CD4-positive, alpha-beta memory T cell (primary cell): ENCODE measurements at regions of chr4 and their contacts with region 1.

Region 1: DNA sequence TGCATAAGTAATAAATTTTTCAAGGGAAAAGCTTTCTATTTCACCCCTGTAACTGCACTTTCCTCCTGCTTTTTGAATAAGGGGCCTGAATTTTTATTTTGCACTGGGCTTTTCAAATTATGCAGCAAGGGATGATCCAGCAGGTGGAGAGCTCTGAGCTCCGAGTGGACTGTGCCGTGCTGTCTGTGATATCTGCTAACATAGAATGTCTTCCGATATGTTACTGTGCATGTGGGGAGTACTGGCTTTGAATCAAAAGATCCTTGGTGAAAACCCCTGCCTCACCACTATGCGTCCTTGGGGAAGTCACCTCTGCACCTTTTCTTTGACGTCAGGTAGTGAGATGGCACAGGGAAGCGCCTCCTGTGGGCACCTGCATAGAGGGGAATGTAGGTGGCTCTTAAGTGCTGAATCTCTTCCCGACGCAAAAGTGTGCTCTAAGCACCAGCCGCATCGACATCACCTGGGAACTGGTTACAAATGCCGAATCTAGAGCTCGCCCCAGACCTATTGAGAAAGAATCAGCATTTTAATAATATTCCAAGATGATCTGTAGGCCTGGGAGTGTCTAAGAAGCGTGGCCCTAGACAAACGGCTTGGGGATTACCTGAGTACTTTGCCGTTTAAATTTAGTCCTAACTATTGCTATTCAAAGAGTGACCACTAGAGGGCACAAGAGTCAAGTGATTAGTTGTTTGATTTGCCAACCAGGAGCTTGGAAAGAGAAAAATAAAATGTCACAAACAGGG is 19.2 kb upstream of the WFS1 start:
- DNase-seq: peak in 4 of 5 donors; percentile 61 to 70 (median 66)
- H3K4me3 ChIP-seq: no peak overlapping the region
- H3K4me3 Mint-ChIP-seq: no peak overlapping the region
- H3K27ac ChIP-seq: no peak overlapping the region
- H3K27ac Mint-ChIP-seq: no peak overlapping the region
- H3K4me1 ChIP-seq: no peaks in the 10 kb centered on the region
- H3K4me1 Mint-ChIP-seq: peaks cover 0 to 6% (median 5%) of the 10 kb centered on the region in 4 donors
- H3K27me3 ChIP-seq: peaks cover 6% of the 10 kb centered on the region
- H3K27me3 Mint-ChIP-seq: peaks cover 10 to 30% of the 10 kb centered on the region in 2 donors

Region 2: GRCh38 chr4:6134612-6135220 is 115.7 kb before region 1 on chr4:
- CTCF ChIA-PET with region 1: interaction called, 83 read pairs
- POLR2A ChIA-PET with region 1: interaction called, 8 read pairs
- intact Hi-C with region 1: loop called (anchors 1 kb)
- DNase-seq: peak; percentile 48 to 75 (median 60)
- H3K4me3 ChIP-seq: no peak overlapping the region
- H3K4me3 Mint-ChIP-seq: no peak overlapping the region
- H3K27ac ChIP-seq: no peak overlapping the region
- H3K27ac Mint-ChIP-seq: peak overlapping the region; percentile 6 to 78 (median 49)
- H3K4me1 ChIP-seq: peaks cover 11% of the 10 kb centered on the region
- H3K4me1 Mint-ChIP-seq: peaks cover 6 to 20% (median 14%) of the 10 kb centered on the region in 4 donors
- H3K27me3 ChIP-seq: no peaks in the 10 kb centered on the region
- H3K27me3 Mint-ChIP-seq: no peaks in the 10 kb centered on the region

Region 3: GRCh38 chr4:6155996-6156750 is 94.2 kb before region 1 on chr4:
- CTCF ChIA-PET with region 1: interaction called, 12 read pairs
- POLR2A ChIA-PET with region 1: no interaction called
- intact Hi-C with region 1: no loop called
- DNase-seq: no peak
- H3K4me3 ChIP-seq: no peak overlapping the region
- H3K4me3 Mint-ChIP-seq: no peak overlapping the region
- H3K27ac ChIP-seq: no peak overlapping the region
- H3K27ac Mint-ChIP-seq: peak overlapping the region in 2 of 7 donors; percentile 23 to 73
- H3K4me1 ChIP-seq: peaks cover 55% of the 10 kb centered on the region
- H3K4me1 Mint-ChIP-seq: peaks cover 19 to 83% (median 47%) of the 10 kb centered on the region in 4 donors
- H3K27me3 ChIP-seq: no peaks in the 10 kb centered on the region
- H3K27me3 Mint-ChIP-seq: no peaks in the 10 kb centered on the region

Region 4: GRCh38 chr4:6180841-6181631 is 69.4 kb before region 1 on chr4:
- CTCF ChIA-PET with region 1: interaction called, 12 read pairs
- POLR2A ChIA-PET with region 1: no interaction called
- intact Hi-C with region 1: no loop called
- DNase-seq: peak; percentile 40 to 87 (median 55)
- H3K4me3 ChIP-seq: no peak overlapping the region
- H3K4me3 Mint-ChIP-seq: peak overlapping the region; percentile 35 to 84 (median 70)
- H3K27ac ChIP-seq: peak overlapping the region; percentile 16
- H3K27ac Mint-ChIP-seq: peak overlapping the region; percentile 66 to 89 (median 85)
- H3K4me1 ChIP-seq: peaks cover 82% of the 10 kb centered on the region
- H3K4me1 Mint-ChIP-seq: peaks cover 64 to 87% (median 80%) of the 10 kb centered on the region in 4 donors
- H3K27me3 ChIP-seq: no peaks in the 10 kb centered on the region
- H3K27me3 Mint-ChIP-seq: no peaks in the 10 kb centered on the region

Region 5: GRCh38 chr4:6264225-6264540 is 13.8 kb after region 1 on chr4:
- CTCF ChIA-PET with region 1: interaction called, 43 read pairs
- POLR2A ChIA-PET with region 1: interaction called, 3 read pairs
- intact Hi-C with region 1: no loop called
- DNase-seq: peak in 1 of 5 donors; percentile 5
- H3K4me3 ChIP-seq: no peak overlapping the region
- H3K4me3 Mint-ChIP-seq: no peak overlapping the region
- H3K27ac ChIP-seq: no peak overlapping the region
- H3K27ac Mint-ChIP-seq: no peak overlapping the region
- H3K4me1 ChIP-seq: peaks cover 5% of the 10 kb centered on the region
- H3K4me1 Mint-ChIP-seq: peaks cover 6 to 15% (median 8%) of the 10 kb centered on the region in 4 donors
- H3K27me3 ChIP-seq: no peaks in the 10 kb centered on the region
- H3K27me3 Mint-ChIP-seq: peaks cover 5 to 14% of the 10 kb centered on the region in 2 donors

Region 6: DNA sequence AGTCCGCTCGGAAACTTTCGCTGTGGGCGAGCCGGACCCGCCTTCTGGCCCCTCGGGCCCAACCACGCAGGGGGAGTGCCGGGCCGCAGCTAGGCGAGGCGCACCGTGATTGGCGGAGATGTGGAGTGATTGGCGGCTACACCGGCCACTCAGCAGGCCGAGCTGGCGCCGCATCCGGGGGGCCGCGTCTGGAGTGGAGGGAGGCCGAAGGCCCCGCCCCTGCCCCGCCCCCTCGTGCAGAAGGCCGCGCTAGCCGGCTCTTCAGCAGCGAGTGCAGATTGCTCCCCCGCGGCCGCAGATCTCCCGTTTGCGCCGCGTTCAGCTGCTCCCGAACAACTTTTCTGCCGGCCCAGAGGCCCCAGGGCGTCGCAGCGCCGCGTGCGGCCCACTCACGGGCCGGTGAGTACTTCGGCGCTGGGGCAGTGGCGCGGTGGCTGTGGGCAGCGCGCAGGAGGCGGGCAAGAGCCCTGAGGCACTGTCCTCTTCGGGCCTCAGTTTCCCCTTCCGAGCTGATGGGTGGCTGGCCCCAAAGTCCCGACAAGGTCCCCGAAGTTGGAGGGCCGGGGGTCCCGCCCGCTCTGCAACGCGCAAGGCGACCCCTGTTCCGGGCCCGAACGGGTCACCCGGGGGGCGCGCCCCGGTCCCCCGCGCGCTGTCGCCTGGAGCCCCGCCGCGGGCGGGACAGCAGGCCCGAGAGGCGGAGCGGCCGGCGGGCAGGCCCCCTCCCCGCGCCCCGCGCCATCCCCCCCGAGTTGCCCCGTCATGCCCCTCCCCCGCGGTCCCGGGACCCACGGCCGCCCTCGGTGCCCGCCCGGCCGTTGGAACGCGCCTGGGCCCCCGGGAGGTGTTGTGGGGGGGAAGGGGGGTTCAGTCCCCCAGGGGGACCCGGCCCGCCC is 19.5 kb after region 1 on chr4 and contains the start of gene WFS1:
- CTCF ChIA-PET with region 1: interaction called, 13 read pairs
- POLR2A ChIA-PET with region 1: no interaction called
- intact Hi-C with region 1: no loop called
- DNase-seq: peak; percentile 94 to 96 (median 94)
- H3K4me3 ChIP-seq: peak within 1 kb of the TSS in 1 of 2 donors; percentile 75
- H3K4me3 Mint-ChIP-seq: peak within 1 kb of the TSS; percentile 85 to 92 (median 88)
- H3K27ac ChIP-seq: peak within 1 kb of the TSS; percentile 49
- H3K27ac Mint-ChIP-seq: peak within 1 kb of the TSS in 6 of 7 donors; percentile 48 to 81 (median 71)
- H3K4me1 ChIP-seq: peaks cover 10% of the 10 kb centered on the region
- H3K4me1 Mint-ChIP-seq: peaks cover 13 to 25% (median 14%) of the 10 kb centered on the region in 4 donors
- H3K27me3 ChIP-seq: no peaks in the 10 kb centered on the region
- H3K27me3 Mint-ChIP-seq: peaks cover 0 to 2% of the 10 kb centered on the region in 2 donors
- total RNA-seq, gene WFS1: 5.4 to 5.5 TPM

Region 7: DNA sequence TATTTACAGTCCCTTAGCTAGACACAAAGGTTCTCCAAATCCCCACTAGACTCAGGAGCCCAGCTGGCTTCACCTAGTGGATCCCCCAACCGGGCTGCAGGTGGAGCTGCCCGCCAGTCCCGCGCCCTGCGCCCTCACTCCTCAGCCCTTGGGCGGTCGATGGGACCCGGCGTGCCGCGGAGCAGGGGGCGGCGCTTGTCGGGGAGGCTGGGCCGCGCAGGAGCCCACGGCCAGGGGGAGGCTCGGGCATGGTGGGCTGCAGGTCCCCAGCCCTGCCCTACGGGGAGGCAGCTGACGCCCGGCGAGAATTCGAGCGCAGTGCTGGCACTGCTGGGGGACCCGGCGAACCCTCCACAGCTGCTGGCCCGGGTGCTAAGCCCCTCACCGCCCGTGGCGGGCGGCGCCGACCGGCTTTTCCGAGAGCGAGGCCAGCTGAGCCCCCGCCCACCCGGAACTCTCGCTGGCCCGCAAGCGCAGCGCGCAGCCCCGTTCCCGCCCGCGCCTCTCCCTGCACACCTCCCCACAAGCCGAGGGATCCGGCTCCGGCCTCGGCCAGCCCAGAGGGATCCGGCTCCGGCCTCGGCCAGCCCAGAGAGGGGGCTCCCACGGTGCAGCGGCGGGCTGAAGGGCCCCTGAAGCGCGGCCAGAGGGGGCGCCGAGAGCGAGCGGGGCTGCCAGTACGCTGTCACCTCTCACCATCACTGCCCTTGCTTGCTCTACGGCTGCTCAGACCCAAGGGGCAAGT is 58.7 kb after region 1 on chr4:
- CTCF ChIA-PET with region 1: interaction called, 10 read pairs
- POLR2A ChIA-PET with region 1: interaction called, 4 read pairs
- intact Hi-C with region 1: no loop called
- DNase-seq: no peak
- H3K4me3 ChIP-seq: no peak overlapping the region
- H3K4me3 Mint-ChIP-seq: peak overlapping the region in 6 of 8 donors; percentile 33 to 66 (median 48)
- H3K27ac ChIP-seq: no peak overlapping the region
- H3K27ac Mint-ChIP-seq: no peak overlapping the region
- H3K4me1 ChIP-seq: no peaks in the 10 kb centered on the region
- H3K4me1 Mint-ChIP-seq: peaks cover 4 to 11% (median 8%) of the 10 kb centered on the region in 4 donors
- H3K27me3 ChIP-seq: peaks cover 8% of the 10 kb centered on the region
- H3K27me3 Mint-ChIP-seq: peaks cover 36 to 37% of the 10 kb centered on the region in 2 donors